Panc1 (cell line): ENCODE measurements at regions of chr5 and their contacts with region 1.

Region 1: GRCh38 chr5:9207817-9208418 is 338.0 kb downstream of the SEMA5A start:
- DNase-seq: peak; percentile 35
- ATAC-seq: peak; percentile 84
- H3K4me3 ChIP-seq: no peak overlapping the region
- H3K27ac ChIP-seq: no peak overlapping the region
- H3K4me1 ChIP-seq: no peaks in the 10 kb centered on the region
- H3K27me3 ChIP-seq: no peaks in the 10 kb centered on the region
- CTCF ChIP-seq: peak; percentile 44; the same call in 1 of the 2 replicates

Region 2: GRCh38 chr5:7927466-7928375 is 1280.2 kb before region 1 on chr5:
- CTCF ChIA-PET with region 1: no interaction called
- POLR2A ChIA-PET with region 1: no interaction called
- in situ Hi-C with region 1: no loop called
- intact Hi-C with region 1: loop called (anchors 5 kb)
- DNase-seq: peak; percentile 48
- ATAC-seq: peak; percentile 95
- H3K4me3 ChIP-seq: no peak overlapping the region
- H3K27ac ChIP-seq: no peak overlapping the region
- H3K4me1 ChIP-seq: no peaks in the 10 kb centered on the region
- H3K27me3 ChIP-seq: no peaks in the 10 kb centered on the region; the same call in 1 of the 2 replicates
- CTCF ChIP-seq: peak; percentile 85

Region 3: GRCh38 chr5:8756498-8757084 is 451.3 kb before region 1 on chr5:
- CTCF ChIA-PET with region 1: no interaction called
- POLR2A ChIA-PET with region 1: no interaction called
- in situ Hi-C with region 1: no loop called
- intact Hi-C with region 1: loop called (anchors 2 kb)
- DNase-seq: peak; percentile 41
- ATAC-seq: peak; percentile 58; the same call in 1 of the 2 replicates
- H3K4me3 ChIP-seq: no peak overlapping the region
- H3K27ac ChIP-seq: no peak overlapping the region
- H3K4me1 ChIP-seq: no peaks in the 10 kb centered on the region
- H3K27me3 ChIP-seq: no peaks in the 10 kb centered on the region
- CTCF ChIP-seq: peak; percentile 64